Activated CD4-positive, alpha-beta T cell treated with anti-CD3 and anti-CD28 coated beads for 36 hours (primary cell): ENCODE measurements at regions of chr10 and their contacts with region 1.

Region 1: GRCh38 chr10:3186368-3186767 is 13.8 kb upstream of the PITRM1 start:
- DNase-seq: peak; percentile 79
- ATAC-seq: peak; percentile 100
- H3K4me3 Mint-ChIP-seq: no peak overlapping the region
- H3K27ac Mint-ChIP-seq: no peak overlapping the region
- H3K4me1 Mint-ChIP-seq: peaks cover 20% of the 10 kb centered on the region
- H3K27me3 Mint-ChIP-seq: peaks cover 26% of the 10 kb centered on the region

Region 2: DNA sequence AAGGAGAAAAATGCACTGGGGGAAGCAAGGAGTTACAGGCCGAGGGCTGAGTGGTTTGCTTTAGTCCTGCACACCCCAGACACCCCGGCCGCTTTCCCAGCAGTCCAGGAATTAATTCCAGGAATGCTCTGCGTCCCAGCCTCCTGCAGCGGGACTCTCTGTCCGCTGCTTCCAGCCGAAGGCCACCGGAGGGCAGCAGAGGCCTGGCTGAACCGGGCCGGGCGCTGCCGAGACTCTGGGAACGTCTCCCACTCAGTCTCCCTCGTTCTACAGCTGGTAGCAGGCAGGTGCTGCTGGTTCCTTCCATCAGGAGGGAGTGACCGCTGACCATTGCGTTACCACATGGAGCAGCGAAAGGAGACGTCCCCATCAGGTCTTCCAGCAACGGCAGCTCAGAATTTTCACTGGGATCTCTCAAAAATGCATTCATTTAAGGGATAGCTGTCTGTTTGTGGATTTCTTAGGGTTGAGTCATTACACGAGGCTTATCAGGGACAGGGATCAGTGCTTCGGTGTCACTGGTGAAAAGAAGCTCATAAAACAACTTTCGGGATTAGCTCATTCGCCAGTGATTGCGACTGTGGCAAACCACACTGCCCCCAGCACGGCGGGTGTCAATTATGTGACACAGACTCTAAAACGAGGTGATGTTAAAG is 11.1 kb after region 1 on chr10:
- CTCF ChIA-PET with region 1: interaction called, 18 read pairs
- POLR2A ChIA-PET with region 1: interaction called, 6 read pairs
- intact Hi-C with region 1: loop called in 1 of 2 experiments (anchors 1 kb)
- DNase-seq: peak; percentile 92
- ATAC-seq: peak; percentile 90
- H3K4me3 Mint-ChIP-seq: no peak overlapping the region
- H3K27ac Mint-ChIP-seq: no peak overlapping the region
- H3K4me1 Mint-ChIP-seq: peaks cover 11% of the 10 kb centered on the region
- H3K27me3 Mint-ChIP-seq: peaks cover 60% of the 10 kb centered on the region